ENCODE measurements at regions of chr15 and their contacts with region 1.

Region 1: DNA sequence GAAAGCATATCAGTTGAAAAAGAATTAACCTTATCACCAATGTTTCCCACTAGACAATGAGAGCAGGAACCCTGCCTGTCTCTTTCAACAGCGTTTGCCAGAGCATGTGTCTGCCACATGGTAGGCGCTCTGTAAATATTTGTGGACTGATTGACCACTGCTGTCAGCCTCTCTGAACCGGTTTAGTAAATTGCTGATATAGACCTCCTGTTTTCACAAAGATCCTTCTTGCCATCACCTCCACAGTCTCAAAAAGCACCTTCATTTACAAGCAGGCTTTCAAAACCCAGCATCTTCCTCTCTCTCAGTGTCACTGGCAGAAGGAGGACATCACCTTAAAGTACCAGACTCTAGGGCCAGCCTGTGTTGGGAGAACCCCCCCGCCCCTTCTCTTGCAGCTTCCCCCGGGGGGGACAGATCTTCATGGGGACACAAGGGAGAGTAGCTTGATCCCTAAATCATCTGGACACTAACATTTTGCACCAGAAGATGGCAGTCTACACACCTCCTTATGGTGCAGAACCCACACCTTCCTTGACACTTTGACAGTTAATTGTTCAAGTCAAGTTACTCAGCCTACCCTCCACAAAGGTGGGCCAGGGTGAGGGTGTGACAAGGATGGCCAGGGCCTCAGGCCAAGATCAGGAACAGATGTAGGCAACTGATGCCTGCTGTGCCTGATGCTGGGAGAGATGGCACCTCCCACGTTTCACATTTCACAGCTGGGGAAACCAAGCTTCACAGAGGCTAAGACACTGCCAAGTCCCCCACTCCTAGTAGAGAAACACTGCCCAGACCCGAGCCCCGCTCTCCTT is 37.8 kb upstream of the USP3 start:
- DNase-seq: peak in 4 of 7 donors; percentile 38 to 52 (median 44)
- H3K4me3 ChIP-seq: no peak overlapping the region
- H3K27ac ChIP-seq: no peak overlapping the region
- H3K4me1 ChIP-seq: no peaks in the 10 kb centered on the region
- H3K27me3 ChIP-seq: no peaks in the 10 kb centered on the region
- CTCF ChIP-seq: peak; percentile 38 to 73 (median 62)
- POLR2A ChIP-seq: no peak

Region 2: GRCh38 chr15:63381301-63382204 is 85.0 kb before region 1 on chr15 and contains the start of gene CA12:
- intact Hi-C with region 1: no loop called
- DNase-seq: peak in 3 of 7 donors; percentile 27 to 34 (median 32)
- H3K4me3 ChIP-seq: peak within 1 kb of the TSS in 2 of 4 donors; percentile 21 to 61
- H3K27ac ChIP-seq: no peak within 1 kb of the TSS
- H3K4me1 ChIP-seq: peaks cover 0 to 11% of the 10 kb centered on the region in 2 donors
- H3K27me3 ChIP-seq: peaks cover 29% of the 10 kb centered on the region
- CTCF ChIP-seq: no peak
- POLR2A ChIP-seq: no peak
- total RNA-seq, gene CA12: under 0.01 to 1.4 (median 0.32) TPM in 7 of 9 donors, not detected in the others

Region 3: GRCh38 chr15:63565536-63566186 is 99.1 kb after region 1 on chr15:
- intact Hi-C with region 1: no loop called
- DNase-seq: no peak
- H3K4me3 ChIP-seq: no peak overlapping the region
- H3K27ac ChIP-seq: no peak overlapping the region
- H3K4me1 ChIP-seq: no peaks in the 10 kb centered on the region
- H3K27me3 ChIP-seq: no peaks in the 10 kb centered on the region
- CTCF ChIP-seq: no peak
- POLR2A ChIP-seq: no peak

Region 4: DNA sequence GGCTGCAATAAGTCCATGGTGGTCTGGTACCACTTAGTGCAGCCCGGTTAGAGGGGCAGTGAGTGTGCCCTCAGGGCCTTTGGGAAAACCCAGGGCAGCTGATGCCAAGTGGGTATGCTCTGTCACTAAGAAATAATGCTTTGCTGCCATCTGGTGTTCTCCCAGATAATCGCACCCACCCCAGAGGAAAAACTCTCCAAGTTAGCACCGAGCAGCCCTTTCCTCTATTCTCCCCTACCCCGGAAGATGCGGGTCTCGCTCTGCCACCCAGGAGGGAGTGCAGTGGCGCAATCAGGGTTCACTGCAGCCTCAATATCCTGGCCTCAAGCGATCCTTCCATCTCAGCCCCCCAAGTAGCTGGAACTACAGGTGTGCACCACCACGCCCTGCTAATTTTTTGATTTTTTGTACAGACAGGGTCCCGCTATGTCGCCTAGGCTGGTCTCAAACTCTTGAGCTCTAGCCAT is 601.0 kb after region 1 on chr15:
- intact Hi-C with region 1: loop called in 1 of 2 experiments (anchors 10 kb)
- DNase-seq: peak; percentile 63 to 88 (median 71)
- H3K4me3 ChIP-seq: no peak overlapping the region
- H3K27ac ChIP-seq: no peak overlapping the region
- H3K4me1 ChIP-seq: peaks cover 31 to 35% of the 10 kb centered on the region in 2 donors
- H3K27me3 ChIP-seq: no peaks in the 10 kb centered on the region
- CTCF ChIP-seq: peak; percentile 77 to 89 (median 84)
- POLR2A ChIP-seq: no peak